ENCODE measurements at regions of chr5 and their contacts with region 1.

Region 1: GRCh38 chr5:79936002-79936645 is 54.9 kb downstream of the MTX3 start:
- DNase-seq: no peak
- ATAC-seq: no peak
- H3K4me3 ChIP-seq: no peak overlapping the region
- H3K27ac ChIP-seq: no peak overlapping the region
- H3K4me1 ChIP-seq: no peaks in the 10 kb centered on the region
- H3K27me3 ChIP-seq: 0 out of 2 replicates have a peak, but pooled peaks cover 5% of the 10 kb centered on the region
- CTCF ChIP-seq: no peak

Region 2: GRCh38 chr5:79074641-79075040 is 861.5 kb before region 1 on chr5:
- CTCF ChIA-PET with region 1: no interaction called
- POLR2A ChIA-PET with region 1: no interaction called
- intact Hi-C with region 1: no loop called
- DNase-seq: peak; percentile 64
- ATAC-seq: peak; percentile 80
- H3K4me3 ChIP-seq: no peak overlapping the region
- H3K27ac ChIP-seq: no peak overlapping the region
- H3K4me1 ChIP-seq: peaks cover 8% of the 10 kb centered on the region; the same call in 1 of the 2 replicates
- H3K27me3 ChIP-seq: no peaks in the 10 kb centered on the region
- CTCF ChIP-seq: no peak

Region 3: GRCh38 chr5:79621042-79621441 is 315.1 kb before region 1 on chr5:
- CTCF ChIA-PET with region 1: no interaction called
- POLR2A ChIA-PET with region 1: no interaction called
- intact Hi-C with region 1: no loop called
- DNase-seq: peak; percentile 73
- ATAC-seq: peak; percentile 85
- H3K4me3 ChIP-seq: no peak overlapping the region
- H3K27ac ChIP-seq: no peak overlapping the region
- H3K4me1 ChIP-seq: peaks cover 11% of the 10 kb centered on the region
- H3K27me3 ChIP-seq: no peaks in the 10 kb centered on the region
- CTCF ChIP-seq: no peak

Region 4: DNA sequence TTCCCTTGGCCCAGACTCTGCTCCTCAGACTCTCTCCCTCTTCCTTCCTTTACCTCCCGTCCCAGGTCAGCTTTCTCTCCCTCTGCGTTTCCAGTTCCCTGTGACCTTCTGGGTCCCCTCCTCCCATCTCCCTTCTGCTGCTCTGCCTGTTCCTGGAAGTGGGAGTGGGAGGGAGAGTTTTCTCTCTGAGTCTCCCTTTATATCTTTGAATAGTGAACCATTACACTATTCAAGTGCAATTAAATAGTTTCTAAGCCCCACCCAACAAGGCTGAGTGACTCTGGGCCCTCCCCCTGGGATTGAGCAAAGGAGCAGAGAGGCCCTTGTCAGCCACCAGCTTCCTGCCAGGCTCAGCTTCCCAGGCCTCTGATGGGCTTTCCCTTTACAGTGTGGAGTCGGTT is 133.8 kb after region 1 on chr5:
- CTCF ChIA-PET with region 1: no interaction called
- POLR2A ChIA-PET with region 1: no interaction called
- intact Hi-C with region 1: loop called (anchors 5 kb)
- DNase-seq: no peak
- ATAC-seq: no peak
- H3K4me3 ChIP-seq: no peak overlapping the region
- H3K27ac ChIP-seq: no peak overlapping the region
- H3K4me1 ChIP-seq: no peaks in the 10 kb centered on the region; the same call in 1 of the 2 replicates
- H3K27me3 ChIP-seq: 0 out of 2 replicates have a peak, but pooled peaks cover 4% of the 10 kb centered on the region
- CTCF ChIP-seq: no peak